ENCODE measurements at regions of chr19 and their contacts with region 1.

Region 1: GRCh38 chr19:35628565-35629331 is at the start of gene RBM42:
- DNase-seq: peak; percentile 91 to 98 (median 96)

Region 2: GRCh38 chr19:35612559-35613321 is 16.0 kb before region 1 on chr19 and contains the start of gene HAUS5:
- intact Hi-C with region 1: loop called (anchors 2 kb)
- DNase-seq: peak; percentile 87 to 97 (median 94)

Region 3: GRCh38 chr19:35648017-35648961 is 19.5 kb after region 1 on chr19 and contains the start of gene COX6B1:
- intact Hi-C with region 1: loop called (anchors 2 kb)
- DNase-seq: peak; percentile 89 to 99 (median 97)